Aorta (tissue), 5 donors: ENCODE measurements at regions of chr5 and their contacts with region 1.

Region 1: DNA sequence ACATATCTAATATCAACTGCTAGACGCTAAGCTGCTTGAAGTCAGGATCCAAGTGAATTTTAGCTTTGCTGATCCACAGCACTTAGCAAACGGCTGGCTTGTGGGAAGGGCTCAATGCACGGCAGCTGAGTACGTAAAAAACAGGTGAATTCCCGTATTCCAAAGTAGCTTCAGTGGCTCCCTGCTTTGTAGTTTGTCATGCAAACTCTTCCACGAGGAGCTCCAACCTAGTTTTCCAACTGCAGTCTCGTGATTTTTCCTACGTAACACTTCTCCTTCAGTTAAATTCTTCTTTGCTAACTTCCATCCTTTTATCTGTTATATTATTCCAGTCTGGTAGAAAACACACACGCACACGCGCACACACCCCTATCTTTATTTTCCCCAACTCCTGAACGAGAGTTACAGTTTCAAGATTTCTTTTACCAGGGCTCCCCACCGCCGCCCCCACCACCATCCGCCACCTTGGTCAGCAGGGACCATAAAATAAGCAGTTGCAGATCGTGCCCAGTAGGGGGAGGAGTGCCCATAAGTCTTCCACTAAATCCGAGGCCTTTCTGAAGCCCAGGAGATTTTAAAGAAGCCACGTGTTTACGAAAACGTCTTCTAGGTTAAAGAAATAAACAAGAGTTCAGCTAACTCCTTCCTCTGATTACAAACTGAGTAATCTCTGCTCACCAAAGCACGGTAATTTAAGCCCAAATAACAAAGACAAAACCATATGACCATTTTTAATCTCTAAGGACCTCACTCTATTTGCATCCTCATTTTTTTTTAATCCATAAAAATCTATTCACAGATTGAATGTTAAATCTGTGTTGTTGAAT is 34.8 kb upstream of the TRIO start:
- DNase-seq: peak; percentile 61 to 77
- ATAC-seq: peak; percentile 93
- H3K4me3 ChIP-seq: peak overlapping the region; percentile 40 to 95
- H3K27ac ChIP-seq: no peak overlapping the region
- H3K4me1 ChIP-seq: peaks cover 0 to 2% of the 10 kb centered on the region in 2 donors
- H3K27me3 ChIP-seq: no peaks in the 10 kb centered on the region

Region 2: DNA sequence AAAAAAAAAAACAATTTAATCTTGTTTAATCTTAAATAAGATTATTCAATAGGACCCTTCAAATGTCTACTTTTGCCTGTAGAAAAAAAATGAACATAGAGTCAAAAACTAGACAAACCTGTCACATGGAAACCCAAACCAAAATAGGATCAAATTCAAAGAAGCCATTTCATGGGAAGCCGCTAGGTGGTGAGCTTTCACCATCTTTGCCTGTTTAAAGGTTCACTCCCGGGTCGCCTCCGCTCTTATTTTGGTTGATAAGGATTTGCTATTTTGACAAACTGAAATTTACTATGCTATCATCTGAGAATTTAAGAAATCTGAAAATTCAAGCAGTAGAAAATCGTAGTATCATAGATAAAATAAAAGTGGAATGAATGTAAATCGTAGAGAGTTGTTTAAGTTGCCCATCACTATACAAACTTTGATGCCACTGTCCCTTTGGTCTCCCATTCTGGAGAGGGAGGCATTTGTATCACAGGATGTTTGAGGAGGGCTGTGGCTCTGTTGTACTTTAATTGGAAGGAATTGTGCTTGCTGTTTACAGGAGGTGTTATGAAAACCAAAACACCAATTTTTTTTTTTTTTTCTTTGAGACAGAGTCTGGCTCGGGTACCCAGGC is 120.4 kb before region 1 on chr5:
- intact Hi-C with region 1: loop called in 1 of 2 experiments (anchors 5 kb)
- DNase-seq: peak in 1 of 2 donors; percentile 58
- ATAC-seq: no peak
- H3K4me3 ChIP-seq: no peak overlapping the region
- H3K27ac ChIP-seq: no peak overlapping the region
- H3K4me1 ChIP-seq: no peaks in the 10 kb centered on the region
- H3K27me3 ChIP-seq: no peaks in the 10 kb centered on the region

Region 3: DNA sequence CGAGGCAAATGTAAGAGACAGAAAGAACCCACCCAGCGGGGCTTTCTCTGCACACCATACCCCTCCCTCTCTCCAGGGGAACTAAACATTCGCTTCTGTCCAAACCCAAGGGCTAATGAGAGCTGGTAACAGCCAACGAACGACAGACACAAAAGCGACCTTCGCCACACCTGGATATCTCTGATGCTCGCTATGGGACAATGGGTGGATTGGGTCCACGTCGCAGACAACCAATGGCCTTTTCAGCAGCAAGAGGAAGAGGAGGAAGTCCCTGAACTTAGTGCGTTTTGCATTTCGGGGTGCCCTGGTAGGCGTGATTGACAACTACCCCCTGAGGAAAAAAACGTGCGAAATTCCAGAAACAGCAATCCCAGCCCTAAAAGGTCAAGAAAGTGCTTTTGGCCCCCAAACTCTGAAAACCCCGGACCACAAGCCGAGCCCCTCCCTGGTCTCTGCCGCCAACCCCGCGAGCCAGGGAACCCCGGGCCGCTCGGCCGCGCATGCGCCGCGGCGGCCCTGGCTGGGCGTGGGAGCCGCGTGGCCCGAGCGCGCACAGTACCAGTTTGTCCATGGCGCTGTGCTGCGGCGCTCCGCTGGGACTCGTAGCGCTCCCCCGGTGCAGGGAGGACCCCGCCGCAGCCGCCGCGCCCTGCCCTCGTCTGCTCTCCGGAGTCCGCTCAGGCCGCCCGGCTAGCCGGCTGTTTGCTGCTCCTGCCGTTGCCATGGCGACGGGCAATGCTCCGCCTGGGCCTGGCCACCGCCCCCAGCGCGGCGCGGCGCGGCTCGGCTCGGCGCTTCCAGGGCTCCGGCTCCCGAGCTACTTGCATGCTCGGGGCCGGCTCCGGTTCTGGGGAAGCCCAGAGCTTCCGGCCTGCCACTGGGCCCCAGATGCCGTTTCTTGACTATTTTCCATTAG is 97.0 kb before region 1 on chr5:
- intact Hi-C with region 1: loop called in 1 of 2 experiments (anchors 5 kb)
- DNase-seq: peak; percentile 92 to 96
- ATAC-seq: peak; percentile 93
- H3K4me3 ChIP-seq: peak overlapping the region; percentile 6
- H3K27ac ChIP-seq: no peak overlapping the region
- H3K4me1 ChIP-seq: no peaks in the 10 kb centered on the region
- H3K27me3 ChIP-seq: no peaks in the 10 kb centered on the region

Region 4: DNA sequence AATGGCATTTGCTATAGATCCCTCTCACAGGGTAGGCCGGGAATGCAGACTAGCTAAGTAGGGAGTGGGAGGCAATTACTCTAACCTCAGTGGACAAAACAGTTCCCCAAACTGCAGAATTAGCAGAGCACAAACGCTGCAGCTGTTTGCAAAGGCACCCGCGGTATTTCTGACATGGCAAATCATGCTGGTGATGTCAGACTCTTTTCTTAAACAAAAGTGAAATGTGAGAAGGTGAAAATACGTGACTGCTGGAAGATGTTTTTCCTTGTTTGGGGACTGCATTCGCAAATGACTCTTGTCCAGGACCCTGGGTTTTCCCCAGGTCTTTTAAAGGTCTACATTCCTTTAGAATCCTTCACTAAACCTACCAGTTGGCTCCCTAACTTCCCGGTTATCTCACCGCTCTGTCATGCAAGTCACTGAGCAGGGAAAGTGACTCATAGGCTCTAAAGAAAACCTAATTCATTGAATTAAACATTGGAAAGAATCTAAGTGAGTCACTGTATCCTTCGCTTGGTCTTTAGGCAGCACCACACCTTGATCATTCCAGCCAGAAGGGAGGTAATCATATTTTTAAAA is 72.4 kb before region 1 on chr5:
- intact Hi-C with region 1: loop called in 1 of 2 experiments (anchors 5 kb)
- DNase-seq: peak in 1 of 2 donors; percentile 62
- ATAC-seq: peak; percentile 88
- H3K4me3 ChIP-seq: no peak overlapping the region
- H3K27ac ChIP-seq: peak overlapping the region in 1 of 2 donors; percentile 48
- H3K4me1 ChIP-seq: peaks cover 0 to 2% of the 10 kb centered on the region in 2 donors
- H3K27me3 ChIP-seq: no peaks in the 10 kb centered on the region

Region 5: DNA sequence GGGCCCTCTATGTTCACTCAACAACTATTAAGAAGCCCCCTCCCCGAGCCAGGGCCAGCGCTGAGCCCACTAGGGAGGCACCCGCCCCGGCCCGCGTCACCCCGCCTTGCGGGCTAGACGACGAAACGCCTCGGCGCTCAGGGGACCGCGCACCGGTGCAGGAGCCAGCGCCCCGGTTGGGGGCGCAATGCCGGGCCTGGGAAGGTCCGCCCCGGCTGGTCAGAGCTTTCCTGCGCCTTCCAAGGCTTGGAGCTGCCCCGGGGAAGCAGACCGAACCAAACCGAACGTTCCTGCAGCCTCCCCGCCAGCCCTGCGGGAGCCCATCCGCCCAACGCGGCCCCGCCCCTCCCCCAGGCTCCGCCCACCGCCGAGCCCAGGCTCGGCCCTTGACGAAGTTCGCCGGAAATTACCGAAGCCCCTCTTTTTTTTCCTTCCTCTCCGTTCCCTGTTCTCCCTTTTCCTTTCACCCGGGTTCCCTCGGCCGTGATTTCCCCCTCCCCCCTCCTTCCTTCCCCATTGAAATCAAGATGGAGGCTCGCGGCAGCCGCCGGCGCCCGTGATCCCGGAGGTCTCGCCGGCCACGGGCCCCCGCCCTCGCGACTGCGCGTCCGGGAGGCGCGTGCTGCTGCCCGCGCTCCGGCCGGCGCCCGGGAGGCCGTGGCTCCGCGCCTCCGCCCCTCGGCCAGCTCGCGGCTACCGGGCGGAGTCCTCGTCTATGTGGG is 34.6 kb after region 1 on chr5 and contains the start of gene TRIO:
- intact Hi-C with region 1: loop called (anchors 5 kb)
- DNase-seq: peak; percentile 94 to 98
- ATAC-seq: peak; percentile 95
- H3K4me3 ChIP-seq: peak within 1 kb of the TSS; percentile 64 to 75
- H3K27ac ChIP-seq: peak within 1 kb of the TSS; percentile 81 to 82
- H3K4me1 ChIP-seq: peaks cover 0 to 6% of the 10 kb centered on the region in 2 donors
- H3K27me3 ChIP-seq: no peaks in the 10 kb centered on the region
- total RNA-seq, gene TRIO: 346 to 374 TPM

Region 6: GRCh38 chr5:14270209-14270702 is 161.9 kb after region 1 on chr5:
- intact Hi-C with region 1: loop called (anchors 1 to 5 kb)
- DNase-seq: peak in 1 of 2 donors; percentile 70
- ATAC-seq: peak; percentile 87
- H3K4me3 ChIP-seq: no peak overlapping the region
- H3K27ac ChIP-seq: peak overlapping the region in 1 of 2 donors; percentile 37
- H3K4me1 ChIP-seq: peaks cover 10 to 14% of the 10 kb centered on the region in 2 donors
- H3K27me3 ChIP-seq: no peaks in the 10 kb centered on the region

Region 7: DNA sequence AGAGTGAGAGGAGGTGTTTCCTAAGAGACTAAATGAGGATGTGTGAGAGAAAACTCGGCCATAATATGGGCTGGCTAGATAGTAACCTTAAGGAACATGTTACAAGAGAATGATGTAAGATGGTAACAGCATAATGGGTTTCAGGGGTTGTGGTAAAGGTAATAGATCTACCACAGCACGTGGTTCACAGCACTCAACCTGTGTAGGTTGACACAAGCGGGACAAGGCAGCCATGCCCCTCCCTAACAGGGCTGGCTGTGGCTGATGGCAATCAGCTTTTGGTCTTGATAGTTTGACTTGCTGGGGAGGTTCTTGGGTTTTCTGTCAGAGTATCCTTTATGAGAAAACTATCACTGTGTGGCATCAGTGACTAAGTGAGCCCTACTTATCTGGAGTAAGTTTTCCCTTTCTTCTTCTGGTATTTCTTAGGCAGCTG is 173.4 kb after region 1 on chr5:
- intact Hi-C with region 1: no loop called
- DNase-seq: no peak
- ATAC-seq: no peak
- H3K4me3 ChIP-seq: no peak overlapping the region
- H3K27ac ChIP-seq: no peak overlapping the region
- H3K4me1 ChIP-seq: peaks cover 3 to 15% of the 10 kb centered on the region in 2 donors
- H3K27me3 ChIP-seq: no peaks in the 10 kb centered on the region

Region 8: DNA sequence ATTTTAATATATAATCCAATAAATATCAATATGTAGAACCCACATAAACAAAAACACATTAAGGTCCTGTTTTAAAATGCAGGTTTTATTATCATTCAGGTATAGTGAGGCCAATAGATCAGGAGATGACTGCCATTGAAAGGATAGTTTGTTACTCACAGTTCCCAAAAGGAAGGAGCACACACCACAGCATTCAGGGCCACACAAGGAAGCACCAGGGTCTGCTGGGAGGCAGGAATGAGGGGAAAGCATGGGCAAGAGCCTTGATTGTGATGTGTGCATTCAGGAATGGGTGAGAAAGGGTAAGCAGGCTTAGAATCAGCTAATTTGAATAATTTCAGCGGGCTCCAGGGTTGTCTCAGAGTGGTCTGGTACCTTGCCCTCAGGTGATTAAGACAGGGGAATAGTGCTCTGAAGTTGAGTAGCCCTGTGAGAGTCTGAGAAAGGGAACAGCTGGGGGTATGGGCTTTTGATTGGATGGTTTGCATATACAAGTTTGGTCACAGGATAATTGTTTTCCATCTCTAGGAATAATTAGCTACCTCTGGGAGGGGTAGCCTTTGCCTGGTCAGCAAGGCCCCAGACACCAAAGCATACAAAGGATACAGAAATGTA is 536.3 kb after region 1 on chr5:
- intact Hi-C with region 1: loop called in 1 of 2 experiments (anchors 10 kb)
- DNase-seq: no peak
- ATAC-seq: no peak
- H3K4me3 ChIP-seq: no peak overlapping the region
- H3K27ac ChIP-seq: no peak overlapping the region
- H3K4me1 ChIP-seq: no peaks in the 10 kb centered on the region
- H3K27me3 ChIP-seq: no peaks in the 10 kb centered on the region